SK-N-SH (cell line): ENCODE measurements at regions of chr11 and their contacts with region 1.

Region 1: GRCh38 chr11:3037040-3037944 is 19.9 kb downstream of the CARS1 start:
- DNase-seq: peak; percentile 83
- H3K4me3 ChIP-seq: no peak overlapping the region; a peak in 1 of 4 replicates
- H3K27ac ChIP-seq: no peak overlapping the region
- H3K4me1 ChIP-seq: no peaks in the 10 kb centered on the region; a peak in 1 of 4 replicates
- H3K27me3 ChIP-seq: no peaks in the 10 kb centered on the region
- CTCF ChIP-seq: peak; percentile 83
- EP300 ChIP-seq: no peak
- RAD21 ChIP-seq: peak; percentile 86

Region 2: GRCh38 chr11:3021125-3021524 is 16.2 kb before region 1 on chr11:
- CTCF ChIA-PET with region 1: interaction called, 14 read pairs
- POLR2A ChIA-PET with region 1: no interaction called
- DNase-seq: peak; percentile 76
- H3K4me3 ChIP-seq: no peak overlapping the region; a peak in 1 of 4 replicates
- H3K27ac ChIP-seq: no peak overlapping the region; a peak in 1 of 4 replicates
- H3K4me1 ChIP-seq: peaks cover 0 to 9% of the 10 kb centered on the region in 2 experiments; a peak in 2 of 4 replicates
- H3K27me3 ChIP-seq: no peaks in the 10 kb centered on the region
- CTCF ChIP-seq: peak; percentile 61
- EP300 ChIP-seq: no peak
- RAD21 ChIP-seq: peak; percentile 75

Region 3: GRCh38 chr11:3057069-3057963 is 20.0 kb after region 1 on chr11 and contains the start of gene CARS1:
- CTCF ChIA-PET with region 1: interaction called, 85 read pairs
- POLR2A ChIA-PET with region 1: no interaction called
- DNase-seq: peak; percentile 97
- H3K4me3 ChIP-seq: peak within 1 kb of the TSS; percentile 83 to 94
- H3K27ac ChIP-seq: peak within 1 kb of the TSS; percentile 79 to 84
- H3K4me1 ChIP-seq: peaks cover 12 to 35% of the 10 kb centered on the region in 2 experiments; a peak in 2 of 4 replicates
- H3K27me3 ChIP-seq: no peaks in the 10 kb centered on the region
- CTCF ChIP-seq: no peak
- EP300 ChIP-seq: no peak
- RAD21 ChIP-seq: no peak
- polyA plus RNA-seq, gene CARS1: 52.1 and 65.2 TPM in 2 replicates

Region 4: DNA sequence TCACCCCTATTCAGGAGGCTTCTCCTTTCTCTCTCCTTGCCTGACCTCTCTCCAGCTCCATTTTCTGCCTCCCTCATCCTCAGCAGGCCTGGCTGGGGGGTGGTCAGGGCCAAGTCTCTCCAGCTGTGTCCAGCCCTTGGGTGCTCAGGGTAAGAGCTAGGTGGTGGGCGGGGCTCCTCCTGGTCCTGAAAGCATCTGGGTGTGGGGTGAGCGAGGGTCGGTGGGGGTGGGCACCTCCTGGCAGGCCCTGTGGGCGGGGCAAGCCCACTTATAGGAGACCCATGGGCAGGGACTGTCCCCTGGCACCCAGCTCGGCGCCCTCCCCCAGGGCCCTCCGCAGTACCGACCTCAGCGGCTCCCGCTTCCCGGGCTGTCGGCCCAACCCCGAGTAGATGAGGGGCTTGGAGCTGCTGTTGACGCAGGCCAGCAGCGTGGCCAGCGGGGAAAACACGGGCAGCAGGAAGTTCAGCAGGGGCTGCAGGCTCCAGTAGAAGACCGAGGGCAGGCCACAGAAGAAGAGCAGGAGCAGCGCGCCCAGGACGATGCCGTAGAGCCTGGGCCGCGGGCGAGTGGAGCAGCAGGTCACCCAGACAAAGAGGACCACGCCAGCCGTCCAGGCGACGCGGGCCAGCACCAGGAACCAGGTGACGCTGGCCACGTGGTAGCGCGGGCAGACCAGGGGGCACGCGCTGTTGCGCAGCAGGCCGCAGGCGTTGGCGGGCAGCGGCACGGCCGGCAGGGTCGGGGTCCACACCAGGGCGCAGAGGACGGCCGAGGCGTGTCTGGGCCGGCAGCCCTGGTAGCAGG is 180.6 kb after region 1 on chr11:
- CTCF ChIA-PET with region 1: interaction called, 48 read pairs
- POLR2A ChIA-PET with region 1: no interaction called
- DNase-seq: peak; percentile 34
- H3K4me3 ChIP-seq: no peak overlapping the region
- H3K27ac ChIP-seq: no peak overlapping the region
- H3K4me1 ChIP-seq: no peaks in the 10 kb centered on the region; a peak in 1 of 4 replicates
- H3K27me3 ChIP-seq: no peaks in the 10 kb centered on the region
- CTCF ChIP-seq: no peak
- EP300 ChIP-seq: no peak
- RAD21 ChIP-seq: no peak